ENCODE measurements at regions of chr3 and their contacts with region 1.

Region 1: GRCh38 chr3:107927361-107928083 is 163.3 kb downstream of the CD47 start:
- DNase-seq: peak; percentile 72
- H3K4me3 Mint-ChIP-seq: peak overlapping the region; percentile 74
- H3K27ac Mint-ChIP-seq: no peak overlapping the region
- H3K4me1 Mint-ChIP-seq: peaks cover 12% of the 10 kb centered on the region
- H3K27me3 Mint-ChIP-seq: peaks cover 33% of the 10 kb centered on the region

Region 2: DNA sequence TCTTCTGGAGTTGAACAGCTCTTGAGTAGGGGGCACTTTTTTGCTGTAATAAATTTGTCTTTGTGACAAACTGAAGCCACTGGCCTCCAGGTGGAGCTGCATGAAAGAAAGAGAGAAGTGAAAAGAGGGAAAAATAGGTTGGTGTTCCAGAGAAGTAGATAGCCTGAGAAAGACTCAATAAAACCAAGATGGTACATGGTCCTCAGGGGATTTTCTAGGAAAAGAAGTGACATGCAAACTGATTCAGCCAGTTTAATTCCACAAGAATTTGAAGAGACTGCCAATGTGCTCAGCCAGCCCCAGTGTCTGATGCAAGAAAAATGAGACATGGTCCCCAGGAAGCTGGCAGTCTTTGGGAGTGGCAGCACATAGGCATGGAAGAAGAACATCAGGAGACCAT is 10.6 kb after region 1 on chr3:
- CTCF ChIA-PET with region 1: interaction called, 13 read pairs
- DNase-seq: no peak
- H3K4me3 Mint-ChIP-seq: no peak overlapping the region
- H3K27ac Mint-ChIP-seq: no peak overlapping the region
- H3K4me1 Mint-ChIP-seq: peaks cover 14% of the 10 kb centered on the region
- H3K27me3 Mint-ChIP-seq: peaks cover 20% of the 10 kb centered on the region

Region 3: DNA sequence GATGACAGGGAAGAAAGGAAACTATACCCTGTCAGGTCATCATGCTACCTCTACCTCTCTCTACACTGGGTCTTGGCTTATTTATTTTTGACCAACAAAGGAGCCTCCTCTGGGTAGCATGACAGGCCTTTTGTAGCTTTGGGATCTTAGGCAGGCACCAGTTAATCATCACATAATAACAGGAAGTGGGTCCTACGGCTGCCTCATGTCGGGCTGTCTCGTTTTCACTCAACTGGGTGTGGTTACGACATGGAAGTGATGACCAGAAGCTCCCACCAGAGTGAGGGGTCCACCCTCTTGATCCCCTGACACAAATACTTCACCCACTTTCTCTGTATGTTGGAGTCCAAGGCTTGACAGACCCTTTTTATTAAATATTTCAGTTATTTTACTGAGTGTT is 58.0 kb after region 1 on chr3:
- CTCF ChIA-PET with region 1: interaction called, 11 read pairs
- DNase-seq: peak; percentile 52
- H3K4me3 Mint-ChIP-seq: no peak overlapping the region
- H3K27ac Mint-ChIP-seq: peak overlapping the region; percentile 34
- H3K4me1 Mint-ChIP-seq: peaks cover 39% of the 10 kb centered on the region
- H3K27me3 Mint-ChIP-seq: peaks cover 5% of the 10 kb centered on the region